CD14-positive monocyte (primary cell): ENCODE measurements at regions of chr20 and their contacts with region 1.

Region 1: DNA sequence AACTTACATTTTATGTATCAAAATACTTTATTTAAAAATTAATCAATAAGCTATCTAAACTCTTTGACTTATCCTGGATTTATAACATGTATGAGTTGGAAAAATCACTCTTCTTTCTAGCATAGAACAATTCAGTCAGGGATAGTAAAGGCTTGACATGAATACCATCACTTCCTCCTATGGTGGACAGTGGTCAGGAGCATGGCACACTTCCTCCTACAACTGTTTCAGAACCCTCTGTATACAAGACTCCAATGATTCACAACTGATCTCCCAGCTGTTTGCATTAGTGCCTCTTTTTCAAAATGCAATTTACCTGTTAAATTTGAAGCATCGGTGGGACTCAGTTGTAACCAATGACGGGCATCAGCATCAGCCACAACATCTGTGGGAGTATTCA is 129.7 kb downstream of the RALGAPA2 start:
- DNase-seq: no peak
- H3K4me3 ChIP-seq: no peak overlapping the region
- H3K4me3 Mint-ChIP-seq: no peak overlapping the region
- H3K27ac ChIP-seq: no peak overlapping the region
- H3K27ac Mint-ChIP-seq: no peak overlapping the region
- H3K4me1 ChIP-seq: no peaks in the 10 kb centered on the region
- H3K4me1 Mint-ChIP-seq: no peaks in the 10 kb centered on the region
- H3K27me3 ChIP-seq: no peaks in the 10 kb centered on the region
- H3K27me3 Mint-ChIP-seq: no peaks in the 10 kb centered on the region
- CTCF ChIP-seq: no peak

Region 2: DNA sequence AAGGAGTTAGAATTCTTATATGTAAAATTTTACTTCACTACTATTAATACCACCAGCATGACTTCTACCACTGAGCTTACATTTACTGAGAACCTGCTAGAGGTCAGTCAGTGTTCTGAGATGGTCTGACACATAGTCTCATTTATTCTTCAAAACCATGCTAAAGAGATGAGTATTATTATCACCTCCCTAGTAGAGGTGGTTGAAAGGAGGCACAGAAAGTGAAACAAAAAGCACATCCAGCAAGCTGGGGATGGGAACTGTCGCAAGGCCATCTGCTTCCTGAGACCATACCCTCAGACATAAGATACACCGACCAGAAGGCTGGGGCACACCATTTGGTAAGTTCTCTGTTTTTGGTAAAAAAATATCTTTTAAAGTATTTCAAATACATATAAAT is 77.2 kb before region 1 on chr20:
- intact Hi-C with region 1: loop called in 1 of 2 experiments (anchors 2 kb)
- DNase-seq: no peak
- H3K4me3 ChIP-seq: no peak overlapping the region
- H3K4me3 Mint-ChIP-seq: no peak overlapping the region
- H3K27ac ChIP-seq: no peak overlapping the region
- H3K27ac Mint-ChIP-seq: no peak overlapping the region
- H3K4me1 ChIP-seq: no peaks in the 10 kb centered on the region
- H3K4me1 Mint-ChIP-seq: peaks cover 5% of the 10 kb centered on the region
- H3K27me3 ChIP-seq: no peaks in the 10 kb centered on the region
- H3K27me3 Mint-ChIP-seq: no peaks in the 10 kb centered on the region
- CTCF ChIP-seq: no peak